Activated T-helper 1 cell treated with anti-CD3 and anti-CD28 coated beads, Interleukin-12 subunit alpha, Interleukin-12 subunit beta, Interleukin-2, Interleukin-4 antibody, amounts not matched to agents 30 ng/mL and 10 ng/mL and 1 ng/mL, durations not matched to agents 14 hours and 24 hours and 36 hours (primary cell): ENCODE measurements at regions of chr1 and their contacts with region 1.

Region 1: DNA sequence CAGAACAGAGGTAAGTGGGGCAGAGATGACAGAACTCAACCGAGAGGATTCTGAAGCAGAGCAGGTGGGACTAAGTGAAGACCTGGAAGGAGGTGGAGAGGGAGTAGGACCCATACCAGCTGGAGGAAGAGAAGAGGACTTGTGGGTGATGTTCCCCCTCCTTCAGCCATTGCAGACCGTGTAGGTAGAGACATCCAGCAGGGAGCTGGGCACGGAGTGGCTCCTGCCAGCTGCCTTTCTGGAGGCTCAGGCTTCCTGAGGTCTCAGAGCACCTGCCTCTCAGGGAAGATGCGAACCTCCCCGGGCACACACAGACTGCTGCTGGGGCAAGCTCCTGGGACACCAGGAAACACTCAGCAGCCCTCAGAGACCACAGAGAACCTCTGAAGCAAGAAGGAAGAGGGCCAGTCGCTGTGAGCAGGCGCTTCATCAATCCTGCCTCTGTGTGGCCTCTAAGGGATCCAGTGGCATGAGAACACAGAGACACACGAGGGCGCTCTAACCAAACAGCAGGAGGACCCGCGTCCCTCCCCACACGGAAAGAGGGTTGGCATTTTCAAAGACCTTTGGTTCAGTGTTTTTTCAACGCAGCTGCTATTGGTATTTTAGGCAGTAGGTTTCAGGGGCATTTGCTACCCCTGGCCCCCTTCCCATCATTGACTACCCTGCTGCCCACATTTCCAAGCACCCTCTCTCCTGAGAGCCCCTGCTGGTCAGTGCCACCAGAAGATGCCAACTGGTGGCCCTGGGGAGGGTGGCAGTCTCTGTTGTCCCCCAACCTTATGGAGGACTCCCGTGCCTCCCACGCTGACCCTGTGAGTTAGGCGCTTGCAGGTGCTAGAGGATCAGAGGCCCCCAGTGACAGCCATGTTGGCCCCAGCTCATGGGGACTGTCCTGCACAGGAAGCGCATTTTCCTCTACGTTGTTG is 89.6 kb upstream of the EDN2 start:
- DNase-seq: peak; percentile 73
- H3K4me3 Mint-ChIP-seq: no peak overlapping the region
- H3K27ac Mint-ChIP-seq: peak overlapping the region; percentile 52
- H3K4me1 Mint-ChIP-seq: peaks cover 65% of the 10 kb centered on the region
- H3K27me3 Mint-ChIP-seq: no peaks in the 10 kb centered on the region

Region 2: GRCh38 chr1:41516168-41517061 is 57.6 kb before region 1 on chr1:
- intact Hi-C with region 1: loop called (anchors 1 kb)
- DNase-seq: peak; percentile 55
- H3K4me3 Mint-ChIP-seq: no peak overlapping the region
- H3K27ac Mint-ChIP-seq: no peak overlapping the region
- H3K4me1 Mint-ChIP-seq: peaks cover 6% of the 10 kb centered on the region
- H3K27me3 Mint-ChIP-seq: no peaks in the 10 kb centered on the region

Region 3: GRCh38 chr1:41662061-41662764 is 88.2 kb after region 1 on chr1:
- intact Hi-C with region 1: loop called (anchors 2 kb)
- DNase-seq: peak; percentile 73
- H3K4me3 Mint-ChIP-seq: peak overlapping the region; percentile 70
- H3K27ac Mint-ChIP-seq: peak overlapping the region; percentile 65
- H3K4me1 Mint-ChIP-seq: peaks cover 83% of the 10 kb centered on the region
- H3K27me3 Mint-ChIP-seq: no peaks in the 10 kb centered on the region

Region 4: GRCh38 chr1:41812051-41812450 is 238.0 kb after region 1 on chr1:
- intact Hi-C with region 1: loop called (anchors 1 kb)
- DNase-seq: peak; percentile 57
- H3K4me3 Mint-ChIP-seq: no peak overlapping the region
- H3K27ac Mint-ChIP-seq: peak overlapping the region; percentile 38
- H3K4me1 Mint-ChIP-seq: peaks cover 57% of the 10 kb centered on the region
- H3K27me3 Mint-ChIP-seq: peaks cover 2% of the 10 kb centered on the region

Region 5: DNA sequence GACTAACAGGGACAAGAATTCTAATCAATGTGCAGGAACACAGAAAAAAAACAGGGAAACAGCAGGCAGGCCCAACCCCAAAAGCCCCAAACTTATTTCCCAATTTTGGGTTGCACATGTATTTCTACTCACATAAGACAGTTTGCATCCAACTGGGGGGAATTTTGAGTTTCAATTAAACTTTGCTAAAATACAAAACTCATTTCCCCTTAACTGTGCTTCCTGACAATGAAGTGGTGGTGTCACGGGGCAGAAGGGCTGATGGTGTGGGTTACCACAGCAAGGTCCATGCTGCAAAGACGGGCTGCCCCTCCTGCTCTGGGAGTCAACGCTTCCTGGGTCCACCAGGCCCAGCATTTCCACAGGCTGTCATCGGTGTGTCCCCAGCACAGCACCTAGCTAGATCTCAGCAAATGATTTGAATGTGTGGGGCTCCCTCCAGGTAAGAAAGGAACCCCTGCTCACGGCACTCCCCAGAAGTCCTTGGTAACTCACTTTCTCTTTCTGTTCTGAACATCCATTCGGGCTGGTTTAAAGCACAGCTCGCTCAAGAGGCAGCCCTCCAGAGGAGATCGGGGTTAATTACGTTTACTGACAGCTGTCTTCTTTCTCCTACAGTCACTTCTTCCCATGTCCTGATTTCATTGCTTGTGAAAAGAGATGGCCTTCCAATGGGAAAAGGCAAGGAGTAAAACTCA is 317.3 kb after region 1 on chr1:
- intact Hi-C with region 1: loop called (anchors 1 kb)
- DNase-seq: peak; percentile 57
- H3K4me3 Mint-ChIP-seq: peak overlapping the region; percentile 82
- H3K27ac Mint-ChIP-seq: peak overlapping the region; percentile 92
- H3K4me1 Mint-ChIP-seq: peaks cover 69% of the 10 kb centered on the region
- H3K27me3 Mint-ChIP-seq: no peaks in the 10 kb centered on the region

Region 6: DNA sequence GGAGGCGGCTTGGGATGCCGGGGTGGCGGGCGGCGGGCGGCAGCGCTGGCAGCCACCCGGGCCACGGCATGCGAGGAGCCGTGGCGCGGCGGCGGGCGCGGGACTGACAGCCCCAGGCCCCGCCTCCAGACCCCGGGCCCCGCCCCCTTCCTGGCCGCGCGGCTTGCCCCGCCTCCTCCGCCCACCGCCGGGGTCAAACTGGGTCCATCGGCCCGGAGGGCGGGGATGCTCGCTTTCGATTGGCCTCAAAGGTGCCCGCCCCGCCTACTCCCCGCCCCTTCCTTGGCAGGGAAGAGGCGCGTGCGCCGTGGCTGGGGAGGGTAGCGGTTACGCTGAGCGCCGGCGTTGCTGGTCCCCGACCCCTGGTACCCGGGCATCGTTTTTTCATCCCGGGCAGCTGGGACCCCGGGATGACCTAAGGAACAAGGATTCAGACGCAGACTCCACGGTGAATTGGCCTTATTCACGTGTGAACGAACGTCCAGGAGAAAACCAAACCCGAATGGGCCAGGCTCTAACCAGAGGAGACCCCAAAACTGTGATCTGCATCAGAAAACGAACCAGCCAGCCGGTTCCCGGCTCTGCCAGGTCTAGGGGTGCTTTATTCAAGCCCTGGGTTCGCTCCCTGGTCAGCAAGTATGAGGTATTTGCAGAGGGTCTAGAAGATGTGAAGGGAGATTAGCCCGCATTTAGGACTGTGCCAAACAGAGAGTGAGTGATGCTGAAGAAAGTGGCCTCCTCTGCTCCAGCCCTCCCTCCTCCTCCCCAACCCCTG is 462.0 kb after region 1 on chr1:
- intact Hi-C with region 1: loop called (anchors 1 kb)
- DNase-seq: peak; percentile 96
- H3K4me3 Mint-ChIP-seq: peak overlapping the region; percentile 80
- H3K27ac Mint-ChIP-seq: no peak overlapping the region
- H3K4me1 Mint-ChIP-seq: peaks cover 40% of the 10 kb centered on the region
- H3K27me3 Mint-ChIP-seq: peaks cover 14% of the 10 kb centered on the region